CD14-positive monocyte (primary cell): ENCODE measurements at regions of chr3 and their contacts with region 1.

Region 1: DNA sequence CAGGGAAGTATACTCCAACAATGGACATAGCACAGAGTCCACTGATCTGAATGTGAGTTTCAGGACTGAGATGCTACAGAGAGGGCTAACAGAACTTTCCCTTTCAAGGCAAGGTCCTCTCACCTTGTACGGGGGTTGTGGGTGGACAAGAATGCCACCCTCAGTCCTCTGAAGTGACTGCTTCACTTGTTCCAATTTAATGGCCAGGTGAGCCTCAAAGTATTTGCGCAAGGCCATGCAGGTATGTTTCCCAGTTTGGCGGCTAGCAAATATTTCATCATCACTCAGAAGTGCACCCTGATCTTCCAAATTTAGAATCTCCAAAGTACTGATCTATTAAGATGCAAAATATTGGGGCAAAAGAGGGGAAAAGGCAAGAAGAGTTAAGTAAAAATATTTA is 38.1 kb downstream of the RBM15B start:
- DNase-seq: no peak
- H3K4me3 ChIP-seq: no peak overlapping the region
- H3K4me3 Mint-ChIP-seq: no peak overlapping the region
- H3K27ac ChIP-seq: no peak overlapping the region
- H3K27ac Mint-ChIP-seq: no peak overlapping the region
- H3K4me1 ChIP-seq: no peaks in the 10 kb centered on the region
- H3K4me1 Mint-ChIP-seq: no peaks in the 10 kb centered on the region
- H3K27me3 ChIP-seq: no peaks in the 10 kb centered on the region
- H3K27me3 Mint-ChIP-seq: peaks cover 0 to 3% (median 0%) of the 10 kb centered on the region in 3 donors
- CTCF ChIP-seq: no peak

Region 2: GRCh38 chr3:51477360-51477711 is 48.2 kb after region 1 on chr3:
- intact Hi-C with region 1: loop called in 1 of 2 experiments (anchors 10 kb)
- DNase-seq: no peak
- H3K4me3 ChIP-seq: no peak overlapping the region
- H3K4me3 Mint-ChIP-seq: no peak overlapping the region
- H3K27ac ChIP-seq: no peak overlapping the region
- H3K27ac Mint-ChIP-seq: no peak overlapping the region
- H3K4me1 ChIP-seq: no peaks in the 10 kb centered on the region
- H3K4me1 Mint-ChIP-seq: no peaks in the 10 kb centered on the region
- H3K27me3 ChIP-seq: no peaks in the 10 kb centered on the region
- H3K27me3 Mint-ChIP-seq: no peaks in the 10 kb centered on the region
- CTCF ChIP-seq: no peak

Region 3: GRCh38 chr3:51604212-51604611 is 175.1 kb after region 1 on chr3:
- intact Hi-C with region 1: no loop called
- DNase-seq: no peak
- H3K4me3 ChIP-seq: no peak overlapping the region
- H3K4me3 Mint-ChIP-seq: no peak overlapping the region
- H3K27ac ChIP-seq: no peak overlapping the region
- H3K27ac Mint-ChIP-seq: peak overlapping the region in 1 of 7 donors; percentile 46
- H3K4me1 ChIP-seq: no peaks in the 10 kb centered on the region
- H3K4me1 Mint-ChIP-seq: peaks cover 6% of the 10 kb centered on the region
- H3K27me3 ChIP-seq: no peaks in the 10 kb centered on the region
- H3K27me3 Mint-ChIP-seq: peaks cover 0 to 2% (median 2%) of the 10 kb centered on the region in 3 donors
- CTCF ChIP-seq: no peak

Region 4: GRCh38 chr3:51869304-51869703 is 440.2 kb after region 1 on chr3:
- intact Hi-C with region 1: no loop called
- DNase-seq: no peak
- H3K4me3 ChIP-seq: no peak overlapping the region
- H3K4me3 Mint-ChIP-seq: no peak overlapping the region
- H3K27ac ChIP-seq: no peak overlapping the region
- H3K27ac Mint-ChIP-seq: no peak overlapping the region
- H3K4me1 ChIP-seq: no peaks in the 10 kb centered on the region
- H3K4me1 Mint-ChIP-seq: no peaks in the 10 kb centered on the region
- H3K27me3 ChIP-seq: peaks cover 5 to 14% of the 10 kb centered on the region in 2 donors
- H3K27me3 Mint-ChIP-seq: peaks cover 7 to 27% (median 14%) of the 10 kb centered on the region in 3 donors
- CTCF ChIP-seq: no peak